Mammary epithelial cell (primary cell): ENCODE measurements at regions of chr2 and their contacts with region 1.

Region 1: DNA sequence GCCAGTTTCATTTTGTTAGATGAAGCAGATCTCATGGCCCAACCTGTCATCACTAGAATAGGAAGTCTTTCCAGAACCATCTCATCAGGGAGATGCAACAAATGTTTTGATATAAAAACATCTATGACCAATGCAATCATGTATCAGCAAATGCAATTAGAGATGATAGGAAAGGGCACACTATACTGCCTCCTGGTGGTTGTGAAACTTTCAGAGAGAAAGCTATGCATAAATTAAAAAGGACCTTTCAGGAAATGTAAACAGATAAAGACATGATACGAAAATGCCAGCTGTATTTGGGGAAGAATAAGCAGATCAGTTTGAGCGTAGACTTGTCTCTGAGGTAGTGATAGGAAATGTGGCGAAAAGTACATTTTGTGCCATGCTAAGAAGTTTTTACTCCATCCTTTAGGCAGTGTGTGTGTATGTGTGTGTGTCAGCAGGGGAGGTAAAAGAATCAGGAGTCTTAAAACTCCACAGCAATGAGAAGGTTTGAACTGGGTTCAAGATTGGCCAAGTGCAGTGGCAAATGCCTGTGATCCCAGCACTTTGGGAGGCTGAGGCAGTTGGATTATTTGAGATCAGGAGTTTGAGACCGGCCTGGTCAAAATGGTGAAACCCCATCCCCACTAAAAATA is 479.3 kb downstream of the CPS1 start:
- DNase-seq: peak; percentile 29
- H3K4me3 ChIP-seq: no peak overlapping the region
- H3K27ac ChIP-seq: no peak overlapping the region
- H3K4me1 ChIP-seq: no peaks in the 10 kb centered on the region
- H3K27me3 ChIP-seq: peaks cover 5% of the 10 kb centered on the region
- CTCF ChIP-seq: peak; percentile 62 to 77

Region 2: DNA sequence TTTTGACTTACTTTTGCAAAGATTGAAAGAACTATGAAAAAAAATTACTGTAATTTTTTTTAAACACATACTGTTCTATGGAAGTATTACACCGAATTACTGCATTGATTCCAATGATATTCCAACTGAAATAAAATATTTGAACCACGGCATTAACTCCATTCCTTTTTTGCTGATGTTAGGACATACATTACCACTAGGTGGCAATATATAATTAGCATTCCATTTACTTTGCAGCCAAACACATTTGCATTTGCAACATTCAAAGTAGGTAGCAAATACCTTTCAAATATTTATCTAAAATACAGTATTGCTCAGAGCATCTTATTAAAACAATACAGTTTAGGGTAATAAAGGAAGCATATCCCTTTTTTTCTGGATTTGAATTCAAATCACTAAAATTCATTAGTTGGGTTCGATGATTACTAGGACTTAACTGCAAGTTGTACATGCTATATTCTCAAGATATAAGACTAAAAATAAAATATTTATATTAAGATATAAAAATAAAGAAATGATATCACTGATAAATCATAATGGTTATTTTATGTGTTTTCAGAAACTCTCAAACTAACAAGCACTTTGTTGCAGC is 590.5 kb before region 1 on chr2:
- CTCF ChIA-PET with region 1: no interaction called
- dilution Hi-C with region 1: no loop called
- in situ Hi-C with region 1: no loop called
- intact Hi-C with region 1: loop called (anchors 5 kb)
- DNase-seq: peak; percentile 8
- H3K4me3 ChIP-seq: no peak overlapping the region
- H3K27ac ChIP-seq: no peak overlapping the region
- H3K4me1 ChIP-seq: no peaks in the 10 kb centered on the region
- H3K27me3 ChIP-seq: no peaks in the 10 kb centered on the region
- CTCF ChIP-seq: peak; percentile 65 to 81

Region 3: DNA sequence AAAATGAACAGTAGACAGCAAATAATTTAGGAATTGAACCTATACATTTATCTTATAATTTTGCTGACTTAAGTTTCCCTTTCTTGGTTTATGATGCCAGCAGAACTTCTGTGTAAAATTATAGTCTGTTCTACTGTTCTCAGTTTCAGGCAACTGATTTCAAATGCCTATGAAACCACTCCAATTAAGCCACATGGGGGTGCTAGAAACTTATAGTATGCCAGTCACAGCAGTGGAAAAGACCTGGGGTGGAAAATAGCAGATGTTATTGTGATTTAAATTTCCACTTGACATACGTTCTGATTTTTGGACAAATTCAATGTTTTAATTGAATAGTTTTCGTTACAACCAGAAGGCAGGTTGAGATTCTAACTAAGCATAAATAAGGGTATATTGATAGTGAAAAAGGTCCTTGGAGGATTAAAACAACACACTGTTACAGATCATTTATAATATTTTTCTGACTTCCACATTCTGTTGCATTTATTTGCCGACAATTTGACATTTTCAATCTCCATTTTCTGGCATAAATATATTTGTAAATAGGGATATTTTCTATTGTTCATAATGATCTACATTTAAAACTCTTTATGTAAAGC is 417.8 kb before region 1 on chr2:
- CTCF ChIA-PET with region 1: no interaction called
- dilution Hi-C with region 1: no loop called
- in situ Hi-C with region 1: loop called in 1 of 2 experiments (anchors 10 kb)
- intact Hi-C with region 1: loop called (anchors 1 kb)
- DNase-seq: peak; percentile 19
- H3K4me3 ChIP-seq: no peak overlapping the region
- H3K27ac ChIP-seq: no peak overlapping the region
- H3K4me1 ChIP-seq: no peaks in the 10 kb centered on the region
- H3K27me3 ChIP-seq: no peaks in the 10 kb centered on the region
- CTCF ChIP-seq: peak; percentile 56 to 70

Region 4: DNA sequence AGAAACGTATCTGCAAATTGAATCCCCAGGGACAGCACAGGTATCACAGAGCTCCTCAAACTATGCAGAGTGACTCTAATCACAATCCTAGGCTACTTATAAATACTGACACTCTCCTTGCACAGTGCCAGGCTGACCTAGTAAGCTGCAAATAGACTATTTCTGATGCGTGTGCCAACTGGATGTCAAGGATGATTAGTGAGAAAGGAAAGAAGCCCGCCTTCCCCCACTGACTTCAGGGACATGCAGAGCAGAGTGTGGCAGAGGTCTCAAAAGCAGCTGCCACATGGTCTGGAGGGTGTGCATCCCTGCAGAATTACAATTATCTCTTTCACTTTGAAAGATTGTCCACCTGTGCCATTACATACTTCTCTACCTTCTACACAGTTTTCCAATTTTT is 243.7 kb before region 1 on chr2:
- CTCF ChIA-PET with region 1: no interaction called
- dilution Hi-C with region 1: no loop called
- in situ Hi-C with region 1: no loop called
- intact Hi-C with region 1: no loop called
- DNase-seq: no peak
- H3K4me3 ChIP-seq: no peak overlapping the region
- H3K27ac ChIP-seq: no peak overlapping the region
- H3K4me1 ChIP-seq: no peaks in the 10 kb centered on the region
- H3K27me3 ChIP-seq: no peaks in the 10 kb centered on the region
- CTCF ChIP-seq: no peak

Region 5: GRCh38 chr2:210895132-210895531 is 140.5 kb before region 1 on chr2:
- CTCF ChIA-PET with region 1: no interaction called
- dilution Hi-C with region 1: no loop called
- in situ Hi-C with region 1: no loop called
- intact Hi-C with region 1: loop called (anchors 10 kb)
- DNase-seq: no peak
- H3K4me3 ChIP-seq: no peak overlapping the region
- H3K27ac ChIP-seq: no peak overlapping the region
- H3K4me1 ChIP-seq: no peaks in the 10 kb centered on the region
- H3K27me3 ChIP-seq: no peaks in the 10 kb centered on the region
- CTCF ChIP-seq: peak in 1 of 2 donors; percentile 13